Activated CD4-positive, alpha-beta T cell treated with anti-CD3 and anti-CD28 coated beads for 36 hours (primary cell): ENCODE measurements at regions of chr7 and their contacts with region 1.

Region 1: DNA sequence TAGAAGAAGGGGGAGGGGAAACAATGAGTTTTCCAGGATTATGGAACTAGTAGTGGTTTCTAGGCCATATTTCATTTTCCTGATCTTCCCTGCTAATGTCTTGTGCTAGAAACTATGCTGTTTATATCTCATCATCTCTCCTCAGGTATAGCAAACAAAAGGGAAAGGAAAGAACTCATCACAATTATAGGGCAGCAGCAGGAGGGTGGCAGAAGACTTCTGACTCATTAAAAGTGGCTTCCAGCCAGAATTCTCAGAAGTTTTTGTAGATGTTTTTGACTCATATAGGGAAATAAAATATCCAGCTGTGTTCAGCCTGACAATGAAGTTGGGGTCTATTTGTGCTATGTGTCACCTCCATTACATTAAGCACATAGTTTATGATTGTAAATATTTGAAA is 6.5 kb downstream of the AHR start:
- DNase-seq: peak; percentile 37
- ATAC-seq: peak; percentile 74
- H3K4me3 Mint-ChIP-seq: peak overlapping the region; percentile 58
- H3K27ac Mint-ChIP-seq: peak overlapping the region; percentile 86
- H3K4me1 Mint-ChIP-seq: peaks cover 31% of the 10 kb centered on the region
- H3K27me3 Mint-ChIP-seq: no peaks in the 10 kb centered on the region

Region 2: DNA sequence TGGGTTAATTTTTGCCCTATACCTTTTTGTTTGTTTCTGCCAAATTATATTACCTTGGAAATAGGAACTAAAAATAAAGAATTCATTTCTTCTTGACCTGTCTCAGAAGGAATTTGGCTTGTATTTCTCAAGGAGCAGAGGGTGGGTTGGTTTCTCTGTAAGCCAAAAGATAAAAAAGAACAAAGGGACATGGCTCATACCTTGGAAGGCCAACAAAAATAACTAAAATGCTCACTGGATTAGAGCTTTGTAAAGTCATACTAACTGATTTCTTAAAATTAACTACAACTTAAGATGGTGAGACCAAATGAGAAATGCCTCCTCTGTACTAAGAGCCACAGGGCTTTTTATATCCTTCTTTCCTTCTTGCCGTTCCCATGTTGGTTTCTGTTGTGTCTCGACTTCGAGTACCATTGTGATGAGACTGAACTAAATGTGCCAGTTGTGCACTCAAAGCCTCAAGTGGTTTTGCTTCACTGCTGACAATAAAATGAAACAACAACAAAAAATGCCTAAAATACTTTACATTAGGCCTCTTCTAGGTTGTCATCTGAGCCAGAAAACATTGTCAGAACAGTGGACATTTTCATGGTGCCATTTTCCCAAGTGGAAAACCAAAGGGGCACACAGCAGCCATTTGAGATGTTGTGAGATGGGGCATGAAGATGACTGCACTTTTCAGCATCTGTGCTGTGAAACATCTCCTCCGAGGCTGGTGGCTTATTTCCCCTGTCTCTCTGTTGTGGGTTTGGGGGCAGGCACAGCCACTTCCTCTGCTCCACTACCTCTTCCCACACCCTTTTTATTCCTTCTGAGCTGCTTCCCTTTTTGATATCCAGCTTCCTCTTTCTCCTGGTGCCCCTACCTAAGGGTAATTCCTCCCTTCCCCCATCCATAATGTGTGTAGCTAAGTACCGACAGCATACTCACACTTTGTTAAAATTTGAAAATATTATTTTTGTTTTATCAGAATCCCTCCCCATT is 371.3 kb before region 1 on chr7:
- CTCF ChIA-PET with region 1: no interaction called
- POLR2A ChIA-PET with region 1: no interaction called
- intact Hi-C with region 1: loop called in 1 of 2 experiments (anchors 2 kb)
- DNase-seq: peak; percentile 33
- ATAC-seq: peak; percentile 39
- H3K4me3 Mint-ChIP-seq: peak overlapping the region; percentile 26
- H3K27ac Mint-ChIP-seq: peak overlapping the region; percentile 70
- H3K4me1 Mint-ChIP-seq: peaks cover 58% of the 10 kb centered on the region
- H3K27me3 Mint-ChIP-seq: no peaks in the 10 kb centered on the region

Region 3: GRCh38 chr7:17021180-17021579 is 283.7 kb before region 1 on chr7:
- CTCF ChIA-PET with region 1: interaction called, 3 read pairs
- POLR2A ChIA-PET with region 1: no interaction called
- intact Hi-C with region 1: loop called in 1 of 2 experiments (anchors 5 kb)
- DNase-seq: no peak
- ATAC-seq: no peak
- H3K4me3 Mint-ChIP-seq: no peak overlapping the region
- H3K27ac Mint-ChIP-seq: no peak overlapping the region
- H3K4me1 Mint-ChIP-seq: peaks cover 12% of the 10 kb centered on the region
- H3K27me3 Mint-ChIP-seq: peaks cover 7% of the 10 kb centered on the region

Region 4: DNA sequence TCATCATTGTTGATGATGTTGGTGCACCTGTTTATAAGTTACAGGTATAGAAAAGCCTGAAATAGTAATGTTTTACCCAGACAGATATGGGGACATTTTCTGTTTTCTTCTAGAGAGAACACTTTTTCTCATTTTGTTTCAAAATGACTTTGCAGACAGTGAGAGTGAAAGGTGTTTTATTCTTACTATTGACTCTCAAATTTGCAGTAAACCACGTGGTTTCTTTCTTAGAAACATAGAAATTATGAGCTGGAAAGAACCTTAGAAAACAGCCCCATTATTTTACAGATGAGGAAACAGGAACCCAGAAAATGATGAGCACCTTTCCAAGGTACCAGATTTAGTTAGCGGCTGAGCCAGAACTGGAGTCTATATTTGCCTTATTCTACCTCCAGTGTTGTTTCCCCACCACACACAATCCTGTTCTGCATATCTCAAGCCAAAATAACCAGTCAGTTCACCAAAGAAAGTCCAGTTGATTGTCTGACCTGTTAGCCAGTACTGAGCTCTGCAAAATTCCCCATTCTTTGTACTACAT is 145.4 kb before region 1 on chr7:
- CTCF ChIA-PET with region 1: no interaction called
- POLR2A ChIA-PET with region 1: no interaction called
- intact Hi-C with region 1: loop called (anchors 1 kb)
- DNase-seq: peak; percentile 24
- ATAC-seq: peak; percentile 90
- H3K4me3 Mint-ChIP-seq: peak overlapping the region; percentile 0
- H3K27ac Mint-ChIP-seq: peak overlapping the region; percentile 55
- H3K4me1 Mint-ChIP-seq: peaks cover 40% of the 10 kb centered on the region
- H3K27me3 Mint-ChIP-seq: peaks cover 4% of the 10 kb centered on the region

Region 5: GRCh38 chr7:17269341-17270221 is 35.3 kb before region 1 on chr7:
- CTCF ChIA-PET with region 1: no interaction called
- POLR2A ChIA-PET with region 1: no interaction called
- intact Hi-C with region 1: no loop called
- DNase-seq: no peak
- ATAC-seq: no peak
- H3K4me3 Mint-ChIP-seq: no peak overlapping the region
- H3K27ac Mint-ChIP-seq: no peak overlapping the region
- H3K4me1 Mint-ChIP-seq: peaks cover 9% of the 10 kb centered on the region
- H3K27me3 Mint-ChIP-seq: no peaks in the 10 kb centered on the region

Region 6: GRCh38 chr7:17402628-17403278 is 97.8 kb after region 1 on chr7:
- CTCF ChIA-PET with region 1: interaction called, 3 read pairs
- POLR2A ChIA-PET with region 1: no interaction called
- intact Hi-C with region 1: loop called (anchors 1 kb)
- DNase-seq: peak; percentile 21
- ATAC-seq: peak; percentile 69
- H3K4me3 Mint-ChIP-seq: peak overlapping the region; percentile 17
- H3K27ac Mint-ChIP-seq: peak overlapping the region; percentile 83
- H3K4me1 Mint-ChIP-seq: peaks cover 28% of the 10 kb centered on the region
- H3K27me3 Mint-ChIP-seq: peaks cover 3% of the 10 kb centered on the region